H1 (cell line): ENCODE measurements at regions of chr16 and their contacts with region 1.

Region 1: DNA sequence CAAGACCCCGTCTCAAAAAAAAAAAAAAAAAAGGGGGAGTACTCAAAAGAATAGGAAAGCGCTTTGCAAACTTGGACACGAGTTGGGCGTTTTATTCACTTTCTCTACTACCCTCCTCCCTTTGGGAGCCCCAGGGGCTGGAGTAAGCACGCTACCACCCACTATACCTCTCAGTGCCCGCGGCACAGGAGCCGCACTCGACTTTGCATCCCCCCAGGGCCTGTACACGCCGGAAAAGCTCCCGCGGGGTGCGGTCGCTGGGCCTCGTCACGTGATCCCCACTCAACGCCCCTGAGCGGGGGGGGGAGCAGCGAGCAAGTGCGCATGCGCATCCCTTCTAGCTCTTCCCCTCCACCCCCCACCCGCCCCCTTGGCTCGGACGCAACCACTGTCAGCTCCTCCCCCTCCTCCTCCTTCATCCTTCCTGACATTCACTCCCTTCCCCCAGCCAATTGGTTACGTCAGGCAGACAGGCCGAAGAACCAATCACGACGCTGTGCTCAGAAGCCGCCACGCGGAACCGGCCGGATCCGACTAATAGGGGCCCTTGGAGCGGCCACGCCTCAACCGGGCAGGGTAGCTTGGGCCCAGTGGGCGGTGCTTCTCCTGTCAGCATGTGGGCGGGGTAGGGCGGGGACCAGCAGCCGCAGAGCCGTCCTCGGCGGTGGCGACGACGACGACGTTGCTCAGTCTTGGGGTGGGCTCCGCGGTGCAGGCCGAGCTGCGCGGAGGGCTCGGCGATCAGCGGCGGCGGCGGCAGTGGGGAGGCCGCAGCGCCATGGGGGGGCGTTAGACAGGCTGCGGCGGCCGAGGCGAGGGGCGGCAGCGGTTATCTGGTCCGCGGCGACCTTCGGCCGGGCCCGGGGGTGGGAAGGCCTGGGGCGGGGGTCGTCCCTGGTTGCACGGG is at the start of gene HAPSTR1:
- DNase-seq: peak; percentile 95 to 100
- H3K4me3 ChIP-seq: peak within 1 kb of the TSS; percentile 85 to 97 (median 95)
- H3K27ac ChIP-seq: peak within 1 kb of the TSS; percentile 91
- H3K4me1 ChIP-seq: peaks cover 0 to 11% (median 6%) of the 10 kb centered on the region in 4 experiments; a peak in 5 of 7 replicates
- H3K27me3 ChIP-seq: no peaks in the 10 kb centered on the region
- CTCF ChIP-seq: no peak
- EP300 ChIP-seq: peak in 1 of 2 experiments; percentile 57; a peak in 1 of 3 replicates
- POLR2A ChIP-seq: peak; percentile 98 to 99
- RAD21 ChIP-seq: no peak
- total RNA-seq, gene HAPSTR1: 63.1 and 66.1 TPM in 2 replicates

Region 2: DNA sequence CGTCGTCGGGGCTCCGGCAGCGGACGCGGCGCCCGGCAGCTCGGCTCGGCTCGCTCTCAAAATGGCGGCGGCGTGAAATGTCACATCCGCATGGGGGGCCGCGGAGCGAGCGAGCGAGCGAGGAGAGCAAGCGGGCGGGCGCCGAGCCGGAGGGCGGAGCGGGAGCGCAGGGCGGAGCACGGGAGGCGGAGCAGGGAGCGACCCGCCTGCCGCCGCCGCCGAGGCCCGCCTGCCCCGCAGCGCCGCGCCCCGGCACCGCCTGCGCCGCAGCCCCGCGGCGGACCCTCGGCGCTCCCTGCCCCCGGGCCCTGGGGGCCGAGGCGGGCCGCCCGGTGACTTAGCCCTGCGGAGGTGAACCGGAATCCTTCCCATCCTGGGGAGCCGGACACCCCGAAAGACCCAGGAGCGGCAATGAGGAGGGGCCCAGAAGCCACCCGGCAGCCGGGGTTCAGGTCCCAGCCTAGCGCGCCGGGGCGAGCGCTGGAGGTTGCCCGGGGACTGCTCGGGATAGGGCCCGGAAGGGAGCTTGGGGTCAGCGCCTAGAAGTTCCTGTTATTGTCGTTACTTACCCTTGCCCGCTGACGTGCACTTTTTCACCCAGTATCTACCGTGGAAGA is 127.3 kb before region 1 on chr16 and contains the start of gene USP7:
- CTCF ChIA-PET with region 1: no interaction called
- POLR2A ChIA-PET with region 1: interaction called, 11 read pairs
- DNase-seq: peak; percentile 46 to 89
- H3K4me3 ChIP-seq: peak within 1 kb of the TSS; percentile 63 to 85 (median 76)
- H3K27ac ChIP-seq: 0 out of 2 replicates have a peak within 1 kb of the TSS, but pooled peaks have one; percentile 38
- H3K4me1 ChIP-seq: peaks cover 25 to 40% (median 26%) of the 10 kb centered on the region in 4 experiments
- H3K27me3 ChIP-seq: peaks cover 0 to 7% (median 2%) of the 10 kb centered on the region in 4 experiments; a peak in 3 of 7 replicates
- CTCF ChIP-seq: no peak
- EP300 ChIP-seq: no peak
- POLR2A ChIP-seq: no peak
- RAD21 ChIP-seq: no peak
- total RNA-seq, gene USP7: 208 and 211 TPM in 2 replicates

Region 3: DNA sequence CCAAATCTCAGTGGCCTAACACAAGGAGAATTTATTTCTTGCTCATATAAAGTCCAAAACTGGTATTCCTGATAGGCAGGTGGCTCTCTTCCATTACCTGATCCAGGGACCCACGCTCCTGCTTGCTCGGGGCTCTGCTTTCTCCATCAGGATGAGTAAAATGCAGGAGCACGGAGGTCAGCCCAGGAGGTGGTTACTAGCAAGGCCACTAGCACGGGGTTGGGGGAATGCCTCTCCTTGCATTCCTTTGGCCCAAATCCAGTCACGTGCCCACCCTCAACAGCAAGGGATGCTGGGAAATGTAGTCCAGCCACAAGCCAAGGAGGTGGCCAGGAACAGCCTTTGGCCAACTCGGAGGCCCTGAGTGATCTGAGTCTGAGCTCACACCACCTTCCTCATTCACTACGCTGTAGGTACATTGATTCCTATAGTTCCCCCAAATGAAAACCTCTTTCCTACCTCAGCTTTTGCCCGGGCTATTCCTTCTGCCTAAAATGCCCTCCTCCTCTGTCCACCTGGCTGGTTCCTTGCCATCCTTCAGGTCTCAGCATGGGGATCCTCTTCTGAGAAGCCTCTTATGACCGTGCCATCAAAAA is 38.1 kb before region 1 on chr16:
- CTCF ChIA-PET with region 1: interaction called, 4 read pairs
- POLR2A ChIA-PET with region 1: interaction called, 16 read pairs
- DNase-seq: peak; percentile 86 to 91
- H3K4me3 ChIP-seq: peak overlapping the region in 3 of 4 experiments; percentile 15 to 55 (median 24); a peak in 5 of 8 replicates
- H3K27ac ChIP-seq: peak overlapping the region; percentile 73; the same call in 1 of the 2 replicates
- H3K4me1 ChIP-seq: peaks cover 0 to 8% (median 3%) of the 10 kb centered on the region in 4 experiments; a peak in 6 of 7 replicates
- H3K27me3 ChIP-seq: no peaks in the 10 kb centered on the region
- CTCF ChIP-seq: no peak
- EP300 ChIP-seq: no peak
- POLR2A ChIP-seq: peak; percentile 77 to 93
- RAD21 ChIP-seq: no peak

Region 4: GRCh38 chr16:9072806-9073341 is 18.3 kb before region 1 on chr16:
- CTCF ChIA-PET with region 1: interaction called, 3 read pairs
- POLR2A ChIA-PET with region 1: interaction called, 72 read pairs
- DNase-seq: no peak
- H3K4me3 ChIP-seq: no peak overlapping the region
- H3K27ac ChIP-seq: no peak overlapping the region
- H3K4me1 ChIP-seq: peaks cover 0 to 4% (median 0%) of the 10 kb centered on the region in 4 experiments; a peak in 1 of 7 replicates
- H3K27me3 ChIP-seq: no peaks in the 10 kb centered on the region; a peak in 1 of 7 replicates
- CTCF ChIP-seq: no peak
- EP300 ChIP-seq: no peak
- POLR2A ChIP-seq: no peak
- RAD21 ChIP-seq: no peak

Region 5: DNA sequence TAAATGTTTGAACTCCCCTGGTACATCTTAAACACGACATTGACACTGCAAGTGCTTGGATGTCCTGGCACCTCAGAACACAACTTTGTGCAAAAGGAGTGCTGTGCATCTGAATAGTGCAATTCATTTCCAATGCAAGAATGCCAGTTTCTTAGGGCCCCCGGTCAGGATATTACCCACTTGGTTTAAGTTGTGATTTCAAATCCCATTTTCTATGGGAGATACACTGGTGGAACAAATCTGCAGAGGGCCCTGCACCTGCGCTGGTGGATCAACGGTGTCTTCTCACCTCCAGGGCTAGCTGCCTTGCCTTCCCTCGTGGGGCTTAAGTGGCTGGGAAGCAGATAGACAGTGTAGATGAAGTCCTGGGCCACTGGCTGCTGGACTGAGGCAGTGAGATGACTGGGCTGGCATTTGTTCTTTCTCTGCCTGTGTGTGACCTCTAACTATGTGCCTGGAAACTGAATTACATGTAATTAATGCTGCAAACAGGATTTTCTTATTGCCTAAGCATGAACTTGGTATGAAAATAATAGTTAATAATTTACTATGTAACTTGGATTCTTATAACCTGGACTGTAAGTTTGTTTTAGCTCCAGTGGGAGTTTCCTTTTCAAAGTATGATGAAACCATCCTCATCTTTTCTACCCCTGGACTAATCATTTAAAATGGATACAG is 21.1 kb after region 1 on chr16:
- CTCF ChIA-PET with region 1: interaction called, 4 read pairs
- POLR2A ChIA-PET with region 1: interaction called, 94 read pairs
- DNase-seq: no peak
- H3K4me3 ChIP-seq: no peak overlapping the region
- H3K27ac ChIP-seq: no peak overlapping the region
- H3K4me1 ChIP-seq: peaks cover 3 to 22% (median 14%) of the 10 kb centered on the region in 4 experiments
- H3K27me3 ChIP-seq: no peaks in the 10 kb centered on the region
- CTCF ChIP-seq: no peak
- EP300 ChIP-seq: no peak
- POLR2A ChIP-seq: peak in 1 of 2 experiments; percentile 53; a peak in 1 of 3 replicates
- RAD21 ChIP-seq: no peak

Region 6: GRCh38 chr16:9123871-9124270 is 32.7 kb after region 1 on chr16:
- CTCF ChIA-PET with region 1: no interaction called
- POLR2A ChIA-PET with region 1: interaction called, 18 read pairs
- DNase-seq: peak in 1 of 2 experiments; percentile 33
- H3K4me3 ChIP-seq: no peak overlapping the region
- H3K27ac ChIP-seq: no peak overlapping the region; the same call in 1 of the 2 replicates
- H3K4me1 ChIP-seq: peaks cover 0 to 11% (median 7%) of the 10 kb centered on the region in 4 experiments; a peak in 5 of 7 replicates
- H3K27me3 ChIP-seq: no peaks in the 10 kb centered on the region
- CTCF ChIP-seq: no peak
- EP300 ChIP-seq: no peak
- POLR2A ChIP-seq: no peak
- RAD21 ChIP-seq: no peak

Region 7: GRCh38 chr16:9151597-9151996 is 60.4 kb after region 1 on chr16:
- CTCF ChIA-PET with region 1: no interaction called
- POLR2A ChIA-PET with region 1: no interaction called
- DNase-seq: no peak
- H3K4me3 ChIP-seq: no peak overlapping the region
- H3K27ac ChIP-seq: no peak overlapping the region
- H3K4me1 ChIP-seq: peaks cover 10 to 22% (median 16%) of the 10 kb centered on the region in 4 experiments; a peak in 6 of 7 replicates
- H3K27me3 ChIP-seq: no peaks in the 10 kb centered on the region
- CTCF ChIP-seq: no peak
- EP300 ChIP-seq: no peak
- POLR2A ChIP-seq: no peak
- RAD21 ChIP-seq: no peak

Region 8: DNA sequence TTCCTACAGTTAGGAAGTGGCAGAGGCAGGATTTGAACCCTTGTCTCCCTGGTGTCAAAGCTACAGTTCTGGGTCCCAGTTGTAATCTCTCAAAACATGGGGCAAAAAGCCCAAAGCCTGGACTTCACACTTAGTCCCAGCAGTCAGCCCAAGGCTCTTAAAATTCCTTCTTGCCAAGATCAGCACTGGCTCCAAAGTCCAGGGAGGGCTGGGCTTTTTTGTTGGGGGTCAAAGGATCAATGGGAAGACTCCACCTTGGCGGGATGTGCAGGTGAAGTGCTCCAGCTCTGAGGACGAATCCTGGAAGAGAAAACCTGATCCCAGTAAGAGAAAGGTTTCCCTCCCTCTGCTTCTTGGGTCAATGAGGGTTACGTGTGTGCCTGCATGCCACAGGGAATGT is 195.7 kb after region 1 on chr16:
- CTCF ChIA-PET with region 1: no interaction called
- POLR2A ChIA-PET with region 1: no interaction called
- DNase-seq: no peak
- H3K4me3 ChIP-seq: no peak overlapping the region
- H3K27ac ChIP-seq: no peak overlapping the region
- H3K4me1 ChIP-seq: no peaks in the 10 kb centered on the region; a peak in 1 of 7 replicates
- H3K27me3 ChIP-seq: no peaks in the 10 kb centered on the region
- CTCF ChIP-seq: no peak
- EP300 ChIP-seq: no peak
- POLR2A ChIP-seq: no peak
- RAD21 ChIP-seq: no peak